ENCODE measurements at regions of chr17 and their contacts with region 1.

Region 1: DNA sequence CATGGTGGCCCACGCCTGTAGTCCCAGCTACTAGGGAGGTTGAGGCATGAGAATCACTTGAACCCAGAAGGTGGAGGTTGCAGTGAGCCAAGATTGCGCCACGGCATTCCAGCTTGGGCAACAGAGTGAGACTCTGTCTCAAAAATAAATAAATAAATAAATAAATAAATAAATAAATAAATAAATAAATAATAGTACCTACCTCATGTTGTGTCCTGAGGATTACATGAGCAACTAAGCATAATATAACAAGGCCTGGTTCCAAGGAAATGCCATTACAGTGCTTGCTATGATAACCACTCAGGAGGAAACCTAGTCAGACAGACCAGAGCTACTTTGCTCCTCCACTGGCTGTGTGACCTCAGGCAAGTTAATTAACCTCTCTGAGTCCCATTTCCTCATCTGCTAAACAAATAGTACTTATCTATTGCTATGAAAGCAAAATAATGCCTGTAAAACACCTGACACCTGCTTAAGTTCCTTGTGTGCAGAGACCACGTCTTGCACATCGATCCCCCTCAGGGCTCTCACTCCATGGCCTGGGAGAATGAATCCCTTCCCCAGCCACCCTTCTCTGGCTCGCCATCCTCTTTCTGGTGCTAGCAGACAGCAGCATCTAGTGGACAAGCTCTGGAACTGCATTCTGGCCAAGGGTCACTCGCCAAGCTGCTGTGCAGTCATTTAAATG is 7.5 kb downstream of the EPOP start:
- DNase-seq: peak; percentile 75 to 85
- H3K4me3 ChIP-seq: no peak overlapping the region
- H3K4me1 ChIP-seq: peaks cover 6% of the 10 kb centered on the region; the same call in 1 of the 2 replicates
- H3K27me3 ChIP-seq: 0 out of 2 replicates have a peak, but pooled peaks cover 3% of the 10 kb centered on the region

Region 2: GRCh38 chr17:38428112-38428642 is 239.1 kb before region 1 on chr17 and contains the start of gene ARHGAP23:
- in situ Hi-C with region 1: loop called (anchors 10 kb)
- DNase-seq: peak in 1 of 2 experiments; percentile 53
- H3K4me3 ChIP-seq: peak within 1 kb of the TSS; percentile 18
- H3K4me1 ChIP-seq: no peaks in the 10 kb centered on the region
- H3K27me3 ChIP-seq: peaks cover 7% of the 10 kb centered on the region; the same call in 1 of the 2 replicates

Region 3: DNA sequence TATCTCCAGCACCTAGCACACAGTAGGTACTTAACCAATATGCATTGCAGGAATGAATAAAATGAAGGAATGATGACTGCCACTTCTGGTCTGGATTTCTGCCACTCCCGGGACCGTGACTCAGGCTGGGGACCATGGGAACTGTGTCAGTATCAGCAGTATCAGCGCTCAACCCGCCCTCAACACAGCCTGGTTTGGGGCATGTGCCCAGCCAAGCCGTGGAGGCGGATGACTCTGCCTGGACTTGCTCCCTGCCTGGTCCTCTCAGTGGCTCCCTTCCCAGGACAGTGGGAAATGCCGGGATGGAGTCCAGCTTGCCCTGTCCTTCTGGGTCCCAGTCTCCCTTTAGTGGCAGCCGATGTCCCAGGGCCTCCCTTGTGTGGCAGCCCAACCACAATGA is 116.6 kb before region 1 on chr17:
- in situ Hi-C with region 1: loop called (anchors 5 kb)
- DNase-seq: no peak
- H3K4me3 ChIP-seq: no peak overlapping the region
- H3K4me1 ChIP-seq: no peaks in the 10 kb centered on the region
- H3K27me3 ChIP-seq: no peaks in the 10 kb centered on the region

Measured in HAP-1 (cell line).